CD4-positive, alpha-beta memory T cell (primary cell): ENCODE measurements at regions of chr4 and their contacts with region 1.

Region 1: GRCh38 chr4:3074078-3074795 is at the starts of genes HTT and HTT-AS:
- DNase-seq: peak; percentile 94 to 99 (median 96)
- H3K4me3 ChIP-seq: peak within 1 kb of the TSS; percentile 65 to 87
- H3K4me3 Mint-ChIP-seq: peak within 1 kb of the TSS; percentile 87 to 96 (median 92)
- H3K27ac ChIP-seq: peak within 1 kb of the TSS; percentile 75
- H3K27ac Mint-ChIP-seq: peak within 1 kb of the TSS; percentile 84 to 97 (median 95)
- H3K4me1 ChIP-seq: peaks cover 29% of the 10 kb centered on the region
- H3K4me1 Mint-ChIP-seq: peaks cover 18 to 32% (median 24%) of the 10 kb centered on the region in 4 donors
- H3K27me3 ChIP-seq: no peaks in the 10 kb centered on the region
- H3K27me3 Mint-ChIP-seq: no peaks in the 10 kb centered on the region
- total RNA-seq, gene HTT: 62.2 to 67.7 TPM
- total RNA-seq, gene HTT-AS: not detected

Region 2: DNA sequence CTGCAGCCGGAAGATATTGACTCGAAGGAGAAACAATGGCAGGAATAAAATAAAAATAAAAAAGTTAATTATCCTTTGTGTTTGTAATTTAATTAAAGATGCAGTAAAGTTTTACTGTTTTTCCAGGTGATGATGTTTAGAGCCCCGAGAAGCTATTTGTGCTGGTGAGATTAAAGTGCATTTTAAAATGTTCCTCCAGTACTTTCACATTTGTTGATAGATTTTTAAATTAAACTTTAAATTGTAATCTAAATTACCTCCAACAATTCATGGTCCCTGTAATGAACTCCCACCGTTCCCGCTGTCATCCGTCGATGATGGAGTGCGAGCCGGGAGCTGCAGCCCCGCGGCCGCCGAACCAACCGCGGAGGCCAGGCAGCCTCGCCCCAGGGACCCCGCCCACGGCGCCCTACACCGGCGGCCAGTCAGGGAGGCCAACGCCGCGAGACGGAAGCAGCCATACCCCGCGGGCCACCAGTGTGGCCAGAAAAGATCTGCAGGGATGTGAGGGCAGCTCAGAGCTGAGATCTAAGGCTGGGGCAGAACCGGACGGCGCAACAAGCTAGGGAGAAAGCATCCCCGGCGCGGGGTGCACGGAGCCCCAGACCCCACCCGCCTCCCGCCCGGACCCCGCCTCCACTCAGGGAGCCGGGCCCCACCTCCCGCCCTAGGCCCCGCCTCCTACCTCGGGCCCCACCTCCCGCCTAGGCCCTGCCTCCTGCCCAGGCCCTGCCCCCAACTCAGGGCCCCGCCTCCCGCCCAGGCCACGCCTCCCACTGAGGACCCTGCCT is 1494.1 kb before region 1 on chr4:
- CTCF ChIA-PET with region 1: no interaction called
- POLR2A ChIA-PET with region 1: no interaction called
- intact Hi-C with region 1: loop called (anchors 10 kb)
- DNase-seq: peak in 4 of 5 donors; percentile 90 to 92 (median 91)
- H3K4me3 ChIP-seq: peak overlapping the region; percentile 29 to 91
- H3K4me3 Mint-ChIP-seq: peak overlapping the region; percentile 72 to 83 (median 78)
- H3K27ac ChIP-seq: peak overlapping the region; percentile 74
- H3K27ac Mint-ChIP-seq: peak overlapping the region; percentile 52 to 85 (median 70)
- H3K4me1 ChIP-seq: peaks cover 6% of the 10 kb centered on the region
- H3K4me1 Mint-ChIP-seq: peaks cover 0 to 7% (median 4%) of the 10 kb centered on the region in 4 donors
- H3K27me3 ChIP-seq: no peaks in the 10 kb centered on the region
- H3K27me3 Mint-ChIP-seq: no peaks in the 10 kb centered on the region

Region 3: GRCh38 chr4:2536193-2537010 is 537.8 kb before region 1 on chr4 and contains the start of gene FAM193A:
- CTCF ChIA-PET with region 1: no interaction called
- POLR2A ChIA-PET with region 1: interaction called, 3 read pairs
- intact Hi-C with region 1: loop called (anchors 10 kb)
- DNase-seq: peak; percentile 98 to 99 (median 99)
- H3K4me3 ChIP-seq: peak within 1 kb of the TSS; percentile 52 to 70
- H3K4me3 Mint-ChIP-seq: peak within 1 kb of the TSS; percentile 88 to 95 (median 92)
- H3K27ac ChIP-seq: peak within 1 kb of the TSS; percentile 83
- H3K27ac Mint-ChIP-seq: peak within 1 kb of the TSS; percentile 92 to 97 (median 94)
- H3K4me1 ChIP-seq: peaks cover 37% of the 10 kb centered on the region
- H3K4me1 Mint-ChIP-seq: peaks cover 10 to 44% (median 16%) of the 10 kb centered on the region in 4 donors
- H3K27me3 ChIP-seq: no peaks in the 10 kb centered on the region
- H3K27me3 Mint-ChIP-seq: no peaks in the 10 kb centered on the region
- total RNA-seq, gene FAM193A: 47.8 TPM

Region 4: DNA sequence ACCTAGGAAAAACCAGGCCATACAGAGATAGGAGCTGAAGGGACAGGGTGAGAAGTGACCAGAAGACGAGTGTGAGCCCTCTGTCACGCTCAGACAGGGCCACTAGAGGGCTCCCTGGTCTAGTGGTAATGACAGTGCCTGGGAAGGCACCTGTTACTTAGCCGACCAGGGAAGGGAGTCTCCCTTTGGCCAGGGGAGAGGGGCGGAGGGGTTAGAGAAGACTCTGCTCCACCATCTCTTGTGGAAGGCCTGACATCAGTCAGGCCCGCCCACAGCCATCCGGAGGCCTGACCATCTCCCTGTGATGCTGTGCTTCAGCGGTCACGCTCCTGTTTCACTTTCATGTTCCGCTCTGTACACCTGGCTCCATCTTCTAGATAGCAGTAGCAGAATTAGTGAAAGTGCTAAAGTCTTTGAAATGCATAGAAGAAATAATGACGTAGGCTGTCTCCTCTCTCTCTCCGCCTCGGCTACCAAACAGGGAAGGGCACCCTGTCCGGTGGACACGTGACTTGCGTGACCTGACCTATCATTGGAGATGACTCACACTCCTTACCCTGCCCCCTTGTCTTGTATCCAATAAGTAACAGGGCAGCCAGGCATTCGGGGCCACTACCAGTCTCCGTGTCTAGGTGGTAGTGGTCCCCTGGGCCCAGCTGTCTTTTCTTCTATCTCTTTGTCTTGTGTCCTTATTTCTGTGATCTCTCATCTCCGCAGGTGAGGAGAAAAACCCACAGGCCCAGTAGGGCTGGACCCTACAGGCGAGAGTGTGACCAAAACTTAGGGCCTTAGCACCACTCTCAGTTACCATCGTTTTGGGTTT is 26.6 kb before region 1 on chr4:
- CTCF ChIA-PET with region 1: interaction called, 5 read pairs
- POLR2A ChIA-PET with region 1: interaction called, 4 read pairs
- intact Hi-C with region 1: loop called (anchors 1 kb)
- DNase-seq: peak; percentile 76 to 93 (median 82)
- H3K4me3 ChIP-seq: peak overlapping the region; percentile 42 to 87
- H3K4me3 Mint-ChIP-seq: peak overlapping the region; percentile 81 to 93 (median 88)
- H3K27ac ChIP-seq: peak overlapping the region; percentile 56
- H3K27ac Mint-ChIP-seq: peak overlapping the region; percentile 82 to 98 (median 94)
- H3K4me1 ChIP-seq: peaks cover 27% of the 10 kb centered on the region
- H3K4me1 Mint-ChIP-seq: peaks cover 20 to 42% (median 24%) of the 10 kb centered on the region in 4 donors
- H3K27me3 ChIP-seq: no peaks in the 10 kb centered on the region
- H3K27me3 Mint-ChIP-seq: no peaks in the 10 kb centered on the region